GM12878 (cell line): ENCODE measurements at regions of chr2 and their contacts with region 1.

Region 1: DNA sequence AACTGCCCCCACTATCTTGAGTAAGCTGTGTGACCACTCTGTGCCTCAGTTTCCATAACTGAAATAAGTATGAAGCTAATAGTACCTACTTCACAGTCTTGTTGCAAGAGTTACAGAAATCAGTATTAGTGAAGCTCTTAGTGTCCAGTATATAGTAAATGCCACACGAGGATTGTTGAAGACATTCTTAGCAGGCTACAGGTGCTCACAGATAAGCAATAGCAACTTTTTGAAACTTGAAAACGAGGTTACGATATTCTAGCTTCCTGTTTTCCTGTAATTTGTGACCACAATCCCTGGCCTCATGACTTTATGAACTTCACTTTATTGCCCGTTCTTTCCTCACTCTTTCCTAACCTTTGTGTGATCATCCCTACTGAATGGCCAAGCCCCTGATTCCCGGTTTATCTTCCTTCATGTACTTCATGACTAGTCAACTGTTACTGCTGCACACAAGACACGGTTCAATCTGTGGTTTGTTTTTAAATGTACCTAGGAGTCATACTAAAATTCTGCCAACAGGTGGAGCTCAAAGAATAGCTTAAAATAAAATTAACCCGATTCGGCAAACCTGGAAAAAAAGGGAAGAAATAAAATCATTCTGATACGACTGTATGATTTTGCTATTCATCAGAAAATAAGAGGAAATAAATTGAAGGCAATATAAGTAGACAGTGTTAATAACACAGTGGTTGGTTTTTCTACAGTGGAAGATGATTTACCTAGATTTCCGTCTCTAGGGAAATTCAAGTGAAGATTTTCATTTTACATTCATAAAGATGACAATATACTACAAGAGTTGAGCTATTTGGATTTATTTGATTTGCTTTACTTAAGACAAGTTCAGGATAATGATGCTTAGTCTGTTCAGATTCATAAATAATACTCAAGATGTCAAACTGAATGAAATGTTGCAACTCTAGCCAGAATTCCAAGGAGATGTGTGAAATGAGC is 38.1 kb upstream of the STAT1 start:
- DNase-seq: peak; percentile 12
- ATAC-seq: peak; percentile 66
- H3K4me3 ChIP-seq: no peak overlapping the region
- H3K27ac ChIP-seq: no peak overlapping the region
- H3K4me1 ChIP-seq: peaks cover 6% of the 10 kb centered on the region
- H3K27me3 ChIP-seq: no peaks in the 10 kb centered on the region
- CTCF ChIP-seq: peak; percentile 48 to 69 (median 60)
- EP300 ChIP-seq: no peak
- POLR2A ChIP-seq: no peak
- RAD21 ChIP-seq: peak; percentile 86

Region 2: DNA sequence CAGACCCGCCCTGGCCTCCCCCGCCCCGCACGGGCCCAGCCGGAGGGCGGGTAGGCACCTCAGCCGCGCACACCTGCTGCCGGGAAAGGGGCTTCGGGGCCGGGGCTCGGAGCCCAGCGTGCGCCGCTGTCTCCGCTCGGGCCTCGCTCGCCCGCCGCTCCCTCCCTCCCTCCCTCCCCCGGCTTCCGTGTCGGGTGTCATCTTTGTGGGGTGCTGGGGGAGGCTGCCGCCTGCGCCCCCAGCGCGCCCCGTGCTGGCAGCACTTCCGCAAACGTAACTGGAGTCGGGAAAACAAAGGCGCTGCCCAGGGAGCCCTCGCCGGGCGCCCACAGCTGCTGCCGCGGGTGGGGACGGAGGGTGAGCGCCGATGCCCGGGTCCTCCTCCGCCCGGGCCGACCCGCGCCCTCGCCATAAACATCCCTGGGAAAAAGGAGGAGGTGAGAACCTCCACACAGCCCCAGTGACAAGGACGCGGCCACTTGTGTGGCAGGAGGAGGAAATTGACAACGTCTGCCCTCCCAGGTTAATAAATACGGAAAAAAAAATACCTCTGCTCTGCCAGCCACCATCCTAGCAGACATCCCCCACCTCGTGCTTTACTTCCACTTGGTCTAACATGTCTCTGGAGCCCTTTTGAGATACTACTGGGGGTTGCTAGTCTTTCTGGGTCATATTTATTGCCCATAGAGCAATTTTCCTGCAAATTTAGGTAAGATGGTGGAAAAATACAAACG is 643.4 kb before region 1 on chr2:
- CTCF ChIA-PET with region 1: no interaction called
- POLR2A ChIA-PET with region 1: interaction called, 12 read pairs
- RAD21 ChIA-PET with region 1: no interaction called
- SMC1A ChIA-PET with region 1: no interaction called
- in situ Hi-C with region 1: no loop called
- intact Hi-C with region 1: no loop called
- DNase-seq: no peak
- ATAC-seq: peak; percentile 66
- H3K4me3 ChIP-seq: peak overlapping the region; percentile 77
- H3K27ac ChIP-seq: peak overlapping the region; percentile 83
- H3K4me1 ChIP-seq: peaks cover 4% of the 10 kb centered on the region
- H3K27me3 ChIP-seq: no peaks in the 10 kb centered on the region
- CTCF ChIP-seq: no peak
- EP300 ChIP-seq: no peak
- POLR2A ChIP-seq: peak; percentile 82
- RAD21 ChIP-seq: no peak

Region 3: GRCh38 chr2:190819840-190820301 is 232.2 kb before region 1 on chr2:
- CTCF ChIA-PET with region 1: no interaction called
- POLR2A ChIA-PET with region 1: no interaction called
- RAD21 ChIA-PET with region 1: no interaction called
- SMC1A ChIA-PET with region 1: no interaction called
- in situ Hi-C with region 1: no loop called
- intact Hi-C with region 1: no loop called
- DNase-seq: no peak
- ATAC-seq: no peak
- H3K4me3 ChIP-seq: no peak overlapping the region
- H3K27ac ChIP-seq: no peak overlapping the region
- H3K4me1 ChIP-seq: no peaks in the 10 kb centered on the region
- H3K27me3 ChIP-seq: no peaks in the 10 kb centered on the region
- CTCF ChIP-seq: no peak
- EP300 ChIP-seq: no peak
- POLR2A ChIP-seq: no peak
- RAD21 ChIP-seq: no peak

Region 4: GRCh38 chr2:190927301-190927700 is 124.8 kb before region 1 on chr2:
- CTCF ChIA-PET with region 1: no interaction called
- POLR2A ChIA-PET with region 1: no interaction called
- RAD21 ChIA-PET with region 1: no interaction called
- SMC1A ChIA-PET with region 1: no interaction called
- in situ Hi-C with region 1: no loop called
- intact Hi-C with region 1: no loop called
- DNase-seq: no peak
- ATAC-seq: no peak
- H3K4me3 ChIP-seq: no peak overlapping the region
- H3K27ac ChIP-seq: no peak overlapping the region
- H3K4me1 ChIP-seq: no peaks in the 10 kb centered on the region
- H3K27me3 ChIP-seq: no peaks in the 10 kb centered on the region
- CTCF ChIP-seq: no peak
- EP300 ChIP-seq: no peak
- POLR2A ChIP-seq: no peak
- RAD21 ChIP-seq: no peak

Region 5: GRCh38 chr2:191038241-191038725 is 13.8 kb before region 1 on chr2:
- CTCF ChIA-PET with region 1: interaction called, 16 read pairs
- POLR2A ChIA-PET with region 1: no interaction called
- RAD21 ChIA-PET with region 1: interaction called, 7 read pairs
- SMC1A ChIA-PET with region 1: interaction called, 9 read pairs
- in situ Hi-C with region 1: no loop called
- intact Hi-C with region 1: no loop called
- DNase-seq: no peak
- ATAC-seq: peak; percentile 68
- H3K4me3 ChIP-seq: no peak overlapping the region
- H3K27ac ChIP-seq: no peak overlapping the region
- H3K4me1 ChIP-seq: no peaks in the 10 kb centered on the region; the same call in 1 of the 2 replicates
- H3K27me3 ChIP-seq: no peaks in the 10 kb centered on the region
- CTCF ChIP-seq: no peak
- EP300 ChIP-seq: no peak
- POLR2A ChIP-seq: no peak
- RAD21 ChIP-seq: no peak

Region 6: DNA sequence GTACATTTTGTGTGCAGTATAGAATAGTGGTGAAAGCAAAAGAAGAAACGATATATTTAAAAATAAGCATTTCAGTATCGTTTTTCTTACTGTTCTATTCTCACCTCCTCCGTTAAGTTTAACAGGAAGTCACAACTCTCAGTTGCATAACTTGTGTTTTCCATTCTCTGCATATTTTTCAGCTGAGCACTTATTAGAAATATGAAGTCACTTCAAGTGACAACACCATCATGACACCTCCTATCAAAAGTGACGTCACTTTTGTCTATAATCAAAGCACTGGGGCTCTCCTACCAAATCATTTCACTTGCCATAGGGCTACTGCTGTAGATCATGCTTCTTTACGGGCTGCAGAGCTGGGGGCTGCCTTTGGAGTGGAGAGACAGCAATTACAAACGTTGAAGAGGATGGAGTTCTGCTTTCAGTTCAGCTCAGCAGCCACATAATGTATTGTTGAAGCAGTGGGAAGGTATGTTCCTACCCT is 62.3 kb after region 1 on chr2:
- CTCF ChIA-PET with region 1: interaction called, 11 read pairs
- POLR2A ChIA-PET with region 1: no interaction called
- RAD21 ChIA-PET with region 1: interaction called, 13 read pairs
- SMC1A ChIA-PET with region 1: interaction called, 33 read pairs
- in situ Hi-C with region 1: no loop called
- intact Hi-C with region 1: no loop called
- DNase-seq: peak; percentile 55
- ATAC-seq: peak; percentile 79
- H3K4me3 ChIP-seq: 0 out of 2 replicates have a peak overlapping the region, but pooled peaks have one; percentile 19
- H3K27ac ChIP-seq: peak overlapping the region; percentile 38; the same call in 1 of the 2 replicates
- H3K4me1 ChIP-seq: peaks cover 35% of the 10 kb centered on the region
- H3K27me3 ChIP-seq: no peaks in the 10 kb centered on the region
- CTCF ChIP-seq: no peak
- EP300 ChIP-seq: peak in 1 of 2 experiments; percentile 46; a peak in 1 of 4 replicates
- POLR2A ChIP-seq: no peak
- RAD21 ChIP-seq: no peak

Region 7: DNA sequence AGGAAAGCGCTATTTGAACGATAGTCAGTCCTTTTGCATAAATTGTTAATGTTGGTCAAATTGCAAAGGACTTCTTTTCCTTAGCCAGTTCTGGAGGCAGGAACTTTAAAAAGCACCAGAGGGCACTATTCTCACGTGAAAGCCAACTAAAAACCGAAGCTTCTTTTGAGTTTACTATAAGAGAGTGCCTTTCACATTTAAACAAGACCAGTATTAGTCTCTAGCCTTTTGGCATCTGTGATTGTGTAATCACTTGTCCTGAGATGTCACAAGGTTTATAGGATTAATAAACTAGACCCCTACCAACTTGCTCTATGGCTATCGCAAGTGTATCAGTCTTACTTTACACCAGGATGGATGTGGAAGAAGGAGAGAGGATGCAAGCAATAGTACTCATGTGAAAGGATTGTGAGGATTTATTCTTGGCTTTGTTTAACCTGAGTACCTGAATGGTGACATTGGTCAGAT is 113.1 kb after region 1 on chr2:
- CTCF ChIA-PET with region 1: interaction called, 659 read pairs
- POLR2A ChIA-PET with region 1: no interaction called
- RAD21 ChIA-PET with region 1: interaction called, 15 read pairs
- SMC1A ChIA-PET with region 1: interaction called, 51 read pairs
- in situ Hi-C with region 1: no loop called
- intact Hi-C with region 1: no loop called
- DNase-seq: no peak
- ATAC-seq: peak; percentile 93
- H3K4me3 ChIP-seq: no peak overlapping the region
- H3K27ac ChIP-seq: no peak overlapping the region
- H3K4me1 ChIP-seq: no peaks in the 10 kb centered on the region
- H3K27me3 ChIP-seq: no peaks in the 10 kb centered on the region
- CTCF ChIP-seq: peak; percentile 41 to 81 (median 62); a peak in 5 of 6 replicates
- EP300 ChIP-seq: no peak
- POLR2A ChIP-seq: no peak
- RAD21 ChIP-seq: peak; percentile 95

Region 8: GRCh38 chr2:191218292-191218898 is 166.3 kb after region 1 on chr2:
- CTCF ChIA-PET with region 1: interaction called, 17 read pairs
- POLR2A ChIA-PET with region 1: no interaction called
- RAD21 ChIA-PET with region 1: interaction called, 9 read pairs
- SMC1A ChIA-PET with region 1: interaction called, 11 read pairs
- in situ Hi-C with region 1: no loop called
- intact Hi-C with region 1: no loop called
- DNase-seq: no peak
- ATAC-seq: peak; percentile 85
- H3K4me3 ChIP-seq: no peak overlapping the region
- H3K27ac ChIP-seq: no peak overlapping the region
- H3K4me1 ChIP-seq: peaks cover 6% of the 10 kb centered on the region
- H3K27me3 ChIP-seq: no peaks in the 10 kb centered on the region
- CTCF ChIP-seq: peak; percentile 46 to 69 (median 47); a peak in 5 of 6 replicates
- EP300 ChIP-seq: no peak
- POLR2A ChIP-seq: no peak
- RAD21 ChIP-seq: peak; percentile 68